CD8-positive, alpha-beta T cell (primary cell): ENCODE measurements at regions of chr11 and their contacts with region 1.

Region 1: DNA sequence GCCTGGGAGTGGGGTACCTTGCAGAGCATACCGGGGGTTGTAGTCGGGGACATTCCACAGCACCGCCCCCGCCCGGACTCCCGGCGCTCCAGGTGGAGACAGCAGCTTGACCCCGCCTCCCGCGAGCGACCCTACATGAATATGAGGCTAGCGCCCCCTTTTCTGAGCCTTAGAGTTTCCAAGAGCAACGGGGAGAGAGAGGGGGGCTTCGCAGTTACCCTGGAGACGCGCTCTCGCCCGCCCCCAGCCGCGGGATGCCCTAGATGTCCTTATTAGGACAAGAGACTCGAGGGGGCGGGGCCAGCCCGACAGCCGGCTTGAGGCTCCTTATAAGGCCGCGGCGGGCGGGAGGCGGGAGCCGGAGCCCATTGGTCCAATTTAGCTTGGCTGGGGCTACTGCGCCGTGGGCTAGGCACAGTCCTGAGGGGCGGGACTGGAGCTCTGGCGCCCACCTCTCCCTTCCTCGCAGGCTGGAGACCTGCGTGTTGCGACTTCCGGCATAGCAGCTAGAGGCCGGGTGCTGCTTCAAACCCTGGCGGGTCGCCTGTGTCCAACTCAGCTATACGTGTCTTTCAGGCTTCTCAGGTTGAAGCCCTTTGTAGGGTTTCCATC is 927 bp upstream of the MUS81 start:
- DNase-seq: peak; percentile 91 to 98 (median 98)
- ATAC-seq: peak; percentile 60
- H3K4me3 ChIP-seq: peak overlapping the region; percentile 65 to 73
- H3K4me3 Mint-ChIP-seq: peak overlapping the region; percentile 95
- H3K27ac ChIP-seq: peak overlapping the region; percentile 78 to 98
- H3K27ac Mint-ChIP-seq: peak overlapping the region; percentile 96
- H3K4me1 ChIP-seq: peaks cover 42% of the 10 kb centered on the region
- H3K4me1 Mint-ChIP-seq: peaks cover 51% of the 10 kb centered on the region
- H3K27me3 ChIP-seq: no peaks in the 10 kb centered on the region
- H3K27me3 Mint-ChIP-seq: no peaks in the 10 kb centered on the region
- CTCF ChIP-seq: no peak

Region 2: GRCh38 chr11:65569973-65570918 is 289.1 kb before region 1 on chr11 and contains the start of gene ZNRD2:
- CTCF ChIA-PET with region 1: no interaction called
- POLR2A ChIA-PET with region 1: interaction called, 4 read pairs
- intact Hi-C with region 1: loop called (anchors 1 kb)
- DNase-seq: peak; percentile 96 to 99 (median 98)
- ATAC-seq: peak; percentile 69
- H3K4me3 ChIP-seq: peak within 1 kb of the TSS; percentile 92 to 94
- H3K4me3 Mint-ChIP-seq: peak within 1 kb of the TSS; percentile 99
- H3K27ac ChIP-seq: peak within 1 kb of the TSS; percentile 94 to 99
- H3K27ac Mint-ChIP-seq: peak within 1 kb of the TSS; percentile 99
- H3K4me1 ChIP-seq: peaks cover 76% of the 10 kb centered on the region
- H3K4me1 Mint-ChIP-seq: peaks cover 76% of the 10 kb centered on the region
- H3K27me3 ChIP-seq: no peaks in the 10 kb centered on the region
- H3K27me3 Mint-ChIP-seq: no peaks in the 10 kb centered on the region
- CTCF ChIP-seq: no peak
- total RNA-seq, gene ZNRD2: 35.6 to 41.4 TPM

Region 3: DNA sequence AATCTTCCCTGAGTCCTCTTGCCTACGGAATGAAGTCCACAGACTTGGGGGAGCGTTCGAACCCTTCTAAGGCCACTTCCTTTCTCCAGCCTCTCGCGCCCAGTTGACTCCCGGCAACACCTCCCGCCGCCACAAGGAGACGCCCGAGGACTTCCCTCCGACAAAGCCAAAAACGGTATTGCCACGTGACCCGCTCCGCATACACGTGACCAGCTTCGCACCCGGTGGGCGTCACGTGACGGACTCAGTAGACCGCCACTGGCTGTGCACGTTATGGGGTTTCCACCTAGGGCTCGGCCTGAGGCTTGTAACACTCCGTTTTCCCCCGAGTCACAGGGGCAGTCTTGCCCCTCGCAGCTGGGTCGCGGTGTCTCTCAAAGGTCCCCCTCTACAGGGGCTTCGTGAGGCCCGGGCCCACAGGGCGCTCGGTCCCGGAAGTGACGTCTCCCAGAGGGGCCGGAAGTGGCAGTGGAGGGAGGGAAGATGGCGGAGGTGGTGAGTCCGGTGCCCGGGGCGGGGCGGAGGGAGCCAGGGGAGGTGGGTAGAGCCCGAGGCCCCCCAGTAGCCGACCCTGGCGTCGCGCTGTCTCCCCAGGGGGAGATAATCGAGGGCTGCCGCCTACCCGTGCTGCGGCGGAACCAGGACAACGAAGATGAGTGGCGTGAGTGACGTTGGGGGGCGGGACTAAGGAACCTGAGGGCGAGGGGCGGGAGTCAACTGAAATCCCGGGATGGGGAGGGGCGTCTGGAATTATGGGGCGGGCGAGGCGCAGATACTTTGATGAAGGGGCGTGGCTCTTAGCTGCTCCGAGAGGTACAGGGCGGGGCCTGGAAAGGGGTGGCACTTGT is 147.3 kb before region 1 on chr11 and contains the start of gene KAT5:
- CTCF ChIA-PET with region 1: interaction called, 19 read pairs
- POLR2A ChIA-PET with region 1: interaction called, 15 read pairs
- intact Hi-C with region 1: loop called (anchors 1 kb)
- DNase-seq: peak; percentile 95 to 99 (median 98)
- ATAC-seq: peak; percentile 83
- H3K4me3 ChIP-seq: peak within 1 kb of the TSS; percentile 92 to 99
- H3K4me3 Mint-ChIP-seq: peak within 1 kb of the TSS; percentile 95
- H3K27ac ChIP-seq: peak within 1 kb of the TSS; percentile 99 to 100
- H3K27ac Mint-ChIP-seq: peak within 1 kb of the TSS; percentile 100
- H3K4me1 ChIP-seq: peaks cover 14% of the 10 kb centered on the region
- H3K4me1 Mint-ChIP-seq: peaks cover 21% of the 10 kb centered on the region
- H3K27me3 ChIP-seq: no peaks in the 10 kb centered on the region
- H3K27me3 Mint-ChIP-seq: no peaks in the 10 kb centered on the region
- CTCF ChIP-seq: peak; percentile 95
- total RNA-seq, gene KAT5: 149 to 151 TPM

Region 4: GRCh38 chr11:65833297-65834030 is 25.8 kb before region 1 on chr11 and contains the start of gene SNX32:
- CTCF ChIA-PET with region 1: interaction called, 7 read pairs
- POLR2A ChIA-PET with region 1: interaction called, 14 read pairs
- intact Hi-C with region 1: loop called (anchors 1 kb)
- DNase-seq: peak; percentile 90 to 97 (median 94)
- ATAC-seq: peak; percentile 99
- H3K4me3 ChIP-seq: peak within 1 kb of the TSS; percentile 79 to 91
- H3K4me3 Mint-ChIP-seq: no peak within 1 kb of the TSS
- H3K27ac ChIP-seq: peak within 1 kb of the TSS; percentile 66 to 80
- H3K27ac Mint-ChIP-seq: peak within 1 kb of the TSS; percentile 64
- H3K4me1 ChIP-seq: peaks cover 17% of the 10 kb centered on the region
- H3K4me1 Mint-ChIP-seq: peaks cover 6% of the 10 kb centered on the region
- H3K27me3 ChIP-seq: peaks cover 0 to 3% of the 10 kb centered on the region in 2 experiments
- H3K27me3 Mint-ChIP-seq: no peaks in the 10 kb centered on the region
- CTCF ChIP-seq: no peak
- total RNA-seq, gene SNX32: 0.52 to 0.69 TPM

Region 5: GRCh38 chr11:65888163-65888814 is 29.0 kb after region 1 on chr11 and contains the start of gene FIBP:
- CTCF ChIA-PET with region 1: interaction called, 287 read pairs
- POLR2A ChIA-PET with region 1: interaction called, 178 read pairs
- intact Hi-C with region 1: loop called (anchors 1 kb)
- DNase-seq: peak; percentile 89 to 98 (median 95)
- ATAC-seq: peak; percentile 57
- H3K4me3 ChIP-seq: peak within 1 kb of the TSS; percentile 57 to 87
- H3K4me3 Mint-ChIP-seq: peak within 1 kb of the TSS; percentile 83
- H3K27ac ChIP-seq: peak within 1 kb of the TSS; percentile 73 to 97
- H3K27ac Mint-ChIP-seq: peak within 1 kb of the TSS; percentile 98
- H3K4me1 ChIP-seq: peaks cover 48% of the 10 kb centered on the region
- H3K4me1 Mint-ChIP-seq: peaks cover 62% of the 10 kb centered on the region
- H3K27me3 ChIP-seq: no peaks in the 10 kb centered on the region
- H3K27me3 Mint-ChIP-seq: no peaks in the 10 kb centered on the region
- CTCF ChIP-seq: peak; percentile 71
- total RNA-seq, gene FIBP: 16.5 to 19.3 TPM

Region 6: GRCh38 chr11:65927904-65928397 is 68.6 kb after region 1 on chr11:
- CTCF ChIA-PET with region 1: interaction called, 5 read pairs
- POLR2A ChIA-PET with region 1: interaction called, 5 read pairs
- intact Hi-C with region 1: loop called in 1 of 2 experiments (anchors 2 kb)
- DNase-seq: peak; percentile 63 to 94 (median 83)
- ATAC-seq: peak; percentile 95
- H3K4me3 ChIP-seq: peak overlapping the region; percentile 42
- H3K4me3 Mint-ChIP-seq: peak overlapping the region; percentile 74
- H3K27ac ChIP-seq: peak overlapping the region; percentile 62 to 88
- H3K27ac Mint-ChIP-seq: peak overlapping the region; percentile 91
- H3K4me1 ChIP-seq: peaks cover 41% of the 10 kb centered on the region
- H3K4me1 Mint-ChIP-seq: peaks cover 39% of the 10 kb centered on the region
- H3K27me3 ChIP-seq: no peaks in the 10 kb centered on the region
- H3K27me3 Mint-ChIP-seq: no peaks in the 10 kb centered on the region
- CTCF ChIP-seq: no peak

Region 7: DNA sequence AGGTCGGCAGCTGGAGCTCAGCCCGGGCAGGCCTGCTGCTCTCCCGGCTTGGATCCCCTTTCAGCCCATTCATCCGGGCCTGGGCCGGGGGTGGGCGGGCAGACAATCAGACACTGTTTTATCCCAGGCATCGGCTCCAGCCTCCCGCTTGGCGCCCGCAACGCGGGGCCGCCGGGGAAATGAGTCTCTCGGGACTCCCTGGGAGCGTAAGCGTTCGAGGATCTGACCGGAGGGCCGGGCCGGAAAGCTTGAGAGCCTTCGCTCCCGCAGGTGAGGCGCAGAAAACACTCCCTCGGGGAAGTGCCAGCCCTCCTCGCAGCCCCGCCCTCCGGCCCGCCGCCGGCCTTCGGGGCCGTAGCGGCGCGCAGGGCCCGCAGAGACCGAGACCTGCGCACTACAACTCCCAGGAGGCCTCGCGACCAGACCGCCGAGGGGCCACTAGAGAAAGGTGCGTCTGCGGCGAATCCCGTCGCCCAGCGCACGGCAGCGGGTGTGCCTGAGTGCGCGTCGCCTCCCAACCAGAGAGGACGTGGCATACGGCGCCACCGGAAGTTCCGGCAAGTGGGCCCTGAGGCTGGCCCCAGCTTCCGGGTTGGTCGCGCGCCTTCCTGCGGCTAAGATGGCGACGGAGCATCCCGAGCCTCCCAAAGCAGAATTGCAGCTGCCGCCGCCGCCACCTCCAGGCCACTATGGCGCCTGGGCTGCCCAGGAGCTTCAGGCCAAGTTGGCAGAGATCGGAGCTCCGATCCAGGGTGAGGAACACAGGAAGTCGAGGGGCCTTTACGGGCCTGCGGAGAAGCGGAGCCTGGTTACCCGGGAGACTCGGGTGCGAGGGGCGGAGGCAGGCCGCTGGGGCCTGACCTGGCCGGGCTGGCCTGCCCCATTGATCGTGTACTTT is 192.7 kb after region 1 on chr11 and contains the start of gene SF3B2:
- CTCF ChIA-PET with region 1: no interaction called
- POLR2A ChIA-PET with region 1: interaction called, 4 read pairs
- intact Hi-C with region 1: loop called (anchors 1 kb)
- DNase-seq: peak; percentile 88 to 99 (median 94)
- ATAC-seq: peak; percentile 97
- H3K4me3 ChIP-seq: peak within 1 kb of the TSS; percentile 97 to 99
- H3K4me3 Mint-ChIP-seq: peak within 1 kb of the TSS; percentile 98
- H3K27ac ChIP-seq: peak within 1 kb of the TSS; percentile 87 to 91
- H3K27ac Mint-ChIP-seq: peak within 1 kb of the TSS; percentile 97
- H3K4me1 ChIP-seq: peaks cover 29% of the 10 kb centered on the region
- H3K4me1 Mint-ChIP-seq: peaks cover 32% of the 10 kb centered on the region
- H3K27me3 ChIP-seq: no peaks in the 10 kb centered on the region
- H3K27me3 Mint-ChIP-seq: no peaks in the 10 kb centered on the region
- CTCF ChIP-seq: no peak
- total RNA-seq, gene SF3B2: 196 to 217 TPM